Activated CD4-positive, alpha-beta T cell treated with anti-CD3 and anti-CD28 coated beads for 36 hours (primary cell): ENCODE measurements at regions of chr11 and their contacts with region 1.

Region 1: DNA sequence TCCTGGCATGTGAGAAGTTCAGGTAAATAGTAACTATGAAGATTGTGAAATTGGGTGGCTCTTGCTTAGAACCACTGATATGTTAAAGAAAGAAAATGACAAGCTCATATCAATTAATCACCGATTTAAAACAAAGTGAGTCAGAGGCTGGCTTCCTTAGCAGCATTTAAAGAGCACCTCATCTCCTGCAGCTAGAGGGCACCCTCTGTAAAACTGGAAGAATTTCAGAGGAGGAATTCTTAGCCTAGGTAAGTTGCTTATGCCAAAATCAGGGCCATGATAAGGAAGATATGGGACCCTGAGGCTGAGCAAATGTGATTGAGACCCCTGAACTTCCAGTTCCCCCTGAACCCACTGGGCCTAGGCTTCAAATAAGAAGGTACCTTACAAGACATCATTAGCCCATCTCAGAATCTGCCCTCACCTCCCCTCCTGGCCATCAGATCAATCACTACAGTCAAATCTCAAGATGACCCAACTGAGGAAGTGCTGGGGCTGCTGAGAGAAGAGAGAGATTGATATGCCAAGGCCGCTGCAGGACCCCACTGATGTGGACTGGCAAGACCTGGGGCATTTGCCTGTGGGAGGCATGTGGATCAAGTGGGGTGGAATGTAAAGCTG is 8.6 kb upstream of the CD3E start:
- DNase-seq: peak; percentile 62
- ATAC-seq: peak; percentile 85
- H3K4me3 Mint-ChIP-seq: no peak overlapping the region
- H3K27ac Mint-ChIP-seq: peak overlapping the region; percentile 68
- H3K4me1 Mint-ChIP-seq: peaks cover 16% of the 10 kb centered on the region
- H3K27me3 Mint-ChIP-seq: no peaks in the 10 kb centered on the region

Region 2: DNA sequence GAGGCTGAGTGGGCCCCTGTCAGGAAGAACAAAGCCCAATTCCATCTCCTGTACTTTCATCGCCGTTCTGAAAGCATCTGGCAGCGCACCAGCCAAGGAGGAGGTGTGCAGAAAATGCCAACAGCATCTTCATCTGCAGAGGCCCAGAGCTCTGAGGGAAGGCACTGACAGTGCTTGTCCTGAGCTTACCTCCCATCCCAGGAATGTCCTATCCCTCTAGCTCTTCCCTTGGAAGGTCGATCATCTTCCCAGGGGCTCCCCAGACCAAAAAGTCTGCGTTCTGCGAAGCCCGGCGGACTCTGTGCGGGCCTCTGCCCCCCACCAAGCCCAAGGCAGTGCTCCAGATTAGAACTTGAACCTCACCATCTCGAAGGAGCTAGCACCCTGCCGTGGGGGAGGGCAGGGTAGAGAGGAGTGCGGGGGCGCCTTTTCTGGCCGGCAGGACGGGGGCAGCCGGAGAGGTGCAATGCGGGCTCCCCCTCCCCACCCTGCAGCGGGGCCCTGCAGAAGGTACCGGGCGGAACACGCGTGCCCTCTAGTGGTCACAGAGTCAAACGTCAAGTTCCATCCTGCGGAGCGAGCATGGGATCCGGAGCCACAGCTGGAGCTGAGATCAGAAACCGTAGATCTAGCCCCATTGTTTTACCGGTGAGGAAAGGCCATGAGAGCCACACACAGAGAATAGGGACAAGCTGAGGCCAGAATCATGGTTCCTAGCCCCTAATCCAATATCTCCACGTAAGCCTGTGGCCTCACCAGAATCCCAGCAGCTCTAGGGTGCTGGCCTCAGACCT is 124.5 kb before region 1 on chr11:
- CTCF ChIA-PET with region 1: interaction called, 12 read pairs
- POLR2A ChIA-PET with region 1: no interaction called
- intact Hi-C with region 1: no loop called
- DNase-seq: peak; percentile 91
- ATAC-seq: peak; percentile 95
- H3K4me3 Mint-ChIP-seq: no peak overlapping the region
- H3K27ac Mint-ChIP-seq: no peak overlapping the region
- H3K4me1 Mint-ChIP-seq: no peaks in the 10 kb centered on the region
- H3K27me3 Mint-ChIP-seq: peaks cover 6% of the 10 kb centered on the region

Region 3: GRCh38 chr11:118311518-118311917 is 15.6 kb after region 1 on chr11:
- CTCF ChIA-PET with region 1: interaction called, 12 read pairs
- POLR2A ChIA-PET with region 1: no interaction called
- intact Hi-C with region 1: no loop called
- DNase-seq: no peak
- ATAC-seq: no peak
- H3K4me3 Mint-ChIP-seq: no peak overlapping the region
- H3K27ac Mint-ChIP-seq: peak overlapping the region; percentile 74
- H3K4me1 Mint-ChIP-seq: peaks cover 91% of the 10 kb centered on the region
- H3K27me3 Mint-ChIP-seq: no peaks in the 10 kb centered on the region

Region 4: GRCh38 chr11:118343981-118344515 is 48.1 kb after region 1 on chr11 and contains the start of gene CD3G:
- CTCF ChIA-PET with region 1: interaction called, 24 read pairs
- POLR2A ChIA-PET with region 1: interaction called, 4 read pairs
- intact Hi-C with region 1: no loop called
- DNase-seq: peak; percentile 85
- ATAC-seq: peak; percentile 68
- H3K4me3 Mint-ChIP-seq: peak within 1 kb of the TSS; percentile 83
- H3K27ac Mint-ChIP-seq: peak within 1 kb of the TSS; percentile 100
- H3K4me1 Mint-ChIP-seq: peaks cover 54% of the 10 kb centered on the region
- H3K27me3 Mint-ChIP-seq: no peaks in the 10 kb centered on the region
- total RNA-seq, gene CD3G: 141 to 146 TPM

Region 5: DNA sequence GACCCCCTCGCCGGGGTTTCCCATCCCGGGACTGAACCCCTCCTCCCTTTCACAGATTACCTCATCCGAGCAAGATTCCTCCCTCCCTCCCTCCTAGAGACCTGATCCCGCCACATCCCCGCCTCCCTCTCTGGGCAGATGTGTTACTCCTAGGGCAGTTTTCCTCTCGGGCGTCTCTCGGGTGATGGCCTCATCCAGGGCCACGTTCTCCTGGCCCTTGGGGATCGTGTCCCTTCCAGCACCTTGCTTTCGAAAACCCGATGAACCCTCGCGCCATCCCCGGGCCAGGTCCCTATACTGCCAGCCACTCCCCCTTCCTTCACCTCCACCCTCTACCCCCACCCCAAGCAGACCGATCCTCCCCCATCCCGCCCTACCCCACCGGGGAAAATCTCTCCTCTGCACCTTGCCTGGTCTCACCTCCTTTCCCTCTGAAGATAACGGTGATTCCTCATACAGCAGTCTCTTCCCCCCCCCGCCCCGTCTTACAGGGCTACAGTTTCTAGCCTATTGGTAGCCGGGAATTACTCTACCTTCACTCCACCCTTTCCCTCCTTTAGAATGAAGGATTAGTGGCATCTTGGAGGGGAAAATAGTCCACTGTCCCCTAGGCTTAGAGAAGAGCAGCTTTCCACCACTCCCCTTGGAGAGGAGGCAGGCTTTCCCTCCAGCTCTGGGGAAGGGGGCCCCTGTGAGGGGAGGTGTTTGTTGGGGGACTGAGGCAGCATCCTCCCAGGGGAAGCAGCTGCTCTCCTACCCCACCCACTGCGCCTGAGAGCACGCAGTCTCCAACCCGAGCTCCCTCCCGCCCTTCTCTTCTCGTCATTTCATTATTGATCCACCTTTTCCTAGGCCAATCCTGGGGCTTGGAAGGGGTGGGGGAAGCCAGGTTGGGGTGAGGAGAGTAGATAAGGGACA is 141.5 kb after region 1 on chr11:
- CTCF ChIA-PET with region 1: no interaction called
- POLR2A ChIA-PET with region 1: no interaction called
- intact Hi-C with region 1: no loop called
- DNase-seq: peak; percentile 76
- ATAC-seq: peak; percentile 9
- H3K4me3 Mint-ChIP-seq: peak overlapping the region; percentile 94
- H3K27ac Mint-ChIP-seq: peak overlapping the region; percentile 94
- H3K4me1 Mint-ChIP-seq: peaks cover 51% of the 10 kb centered on the region
- H3K27me3 Mint-ChIP-seq: no peaks in the 10 kb centered on the region

Region 6: DNA sequence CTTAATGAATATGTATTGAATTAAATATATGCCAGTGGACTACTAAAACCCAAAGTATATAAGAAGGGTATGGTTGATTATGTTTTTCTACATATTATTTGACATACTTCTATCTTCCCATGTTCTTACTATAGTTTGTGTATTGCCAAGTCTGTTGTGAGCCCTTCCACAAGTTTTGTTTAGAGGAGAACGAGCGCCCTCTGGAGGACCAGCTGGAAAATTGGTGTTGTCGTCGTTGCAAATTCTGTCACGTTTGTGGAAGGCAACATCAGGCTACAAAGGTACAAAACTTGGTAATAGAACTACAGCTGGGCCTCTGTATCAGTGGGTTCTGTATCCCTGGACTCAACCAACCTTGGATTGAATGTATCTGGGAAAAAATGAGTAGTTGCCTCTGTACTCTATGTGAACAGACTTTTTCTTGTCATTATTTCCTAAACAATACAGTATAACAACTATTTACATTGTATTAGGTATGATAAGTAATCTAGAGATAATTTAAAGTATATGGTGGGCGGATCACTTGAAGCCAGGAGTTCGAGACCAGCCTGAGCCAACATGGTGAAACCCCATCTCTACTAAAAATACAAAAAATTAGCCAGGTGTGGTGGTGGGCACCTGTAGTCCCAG is 192.7 kb after region 1 on chr11:
- CTCF ChIA-PET with region 1: interaction called, 4 read pairs
- POLR2A ChIA-PET with region 1: no interaction called
- intact Hi-C with region 1: loop called in 1 of 2 experiments (anchors 1 kb)
- DNase-seq: peak; percentile 90
- ATAC-seq: peak; percentile 71
- H3K4me3 Mint-ChIP-seq: no peak overlapping the region
- H3K27ac Mint-ChIP-seq: peak overlapping the region; percentile 10
- H3K4me1 Mint-ChIP-seq: peaks cover 5% of the 10 kb centered on the region
- H3K27me3 Mint-ChIP-seq: no peaks in the 10 kb centered on the region